ENCODE measurements at regions of chr22 and their contacts with region 1.

Region 1: GRCh38 chr22:36301384-36301828 is 48.5 kb downstream of the APOL1 start:
- DNase-seq: peak; percentile 54 to 96 (median 78)

Region 2: GRCh38 chr22:35997438-35997837 is 304.0 kb before region 1 on chr22:
- intact Hi-C with region 1: no loop called
- DNase-seq: no peak

Region 3: GRCh38 chr22:36470162-36470993 is 169.0 kb after region 1 on chr22:
- intact Hi-C with region 1: loop called (anchors 1 kb)
- DNase-seq: peak; percentile 72 to 98 (median 84)